ENCODE measurements at regions of chr11 and their contacts with region 1.

Region 1: GRCh38 chr11:57905439-57905838 is 118.2 kb upstream of the OR9Q1 start:
- DNase-seq: no peak
- ATAC-seq: no peak
- H3K4me3 ChIP-seq: no peak overlapping the region
- H3K27ac ChIP-seq: no peak overlapping the region
- H3K4me1 ChIP-seq: peaks cover 0 to 7% (median 0%) of the 10 kb centered on the region in 12 donors
- H3K27me3 ChIP-seq: no peaks in the 10 kb centered on the region
- CTCF ChIP-seq: no peak
- POLR2A ChIP-seq: no peak

Region 2: DNA sequence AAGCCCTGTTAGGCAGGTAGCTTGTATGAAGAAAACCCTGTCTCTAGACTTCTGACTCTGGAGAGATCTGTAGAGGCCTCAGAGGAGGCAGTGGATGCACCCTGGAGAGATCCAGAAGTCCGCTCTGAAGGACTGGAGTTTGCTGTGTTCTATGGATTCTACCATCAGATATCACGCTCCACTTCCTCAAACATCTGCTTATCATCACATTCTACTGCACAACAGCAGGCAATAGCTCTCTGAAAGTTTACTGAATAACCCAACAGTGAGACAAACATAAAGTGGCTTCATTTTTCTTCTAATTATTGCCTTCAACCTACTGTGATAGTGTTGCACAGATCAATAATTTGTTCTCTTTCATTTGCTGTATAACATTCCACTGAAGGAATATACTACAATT is 59.2 kb after region 1 on chr11:
- intact Hi-C with region 1: loop called in 1 of 10 experiments (anchors 5 kb)
- DNase-seq: no peak
- ATAC-seq: no peak
- H3K4me3 ChIP-seq: no peak overlapping the region
- H3K27ac ChIP-seq: no peak overlapping the region
- H3K4me1 ChIP-seq: no peaks in the 10 kb centered on the region
- H3K27me3 ChIP-seq: peaks cover 0 to 3% (median 0%) of the 10 kb centered on the region in 9 donors
- CTCF ChIP-seq: no peak
- POLR2A ChIP-seq: no peak